Activated CD4-positive, alpha-beta memory T cell treated with anti-CD3 and anti-CD28 coated beads, Interleukin-2, amount 10 ng/mL, durations not matched to agents 7 days and 5 days (primary cell): ENCODE measurements at regions of chr4 and their contacts with region 1.

Region 1: GRCh38 chr4:77095101-77095821 is 19.5 kb upstream of the CCNI start:
- DNase-seq: peak; percentile 77
- H3K4me3 Mint-ChIP-seq: no peak overlapping the region
- H3K27ac Mint-ChIP-seq: no peak overlapping the region
- H3K4me1 Mint-ChIP-seq: peaks cover 12% of the 10 kb centered on the region
- H3K27me3 Mint-ChIP-seq: no peaks in the 10 kb centered on the region

Region 2: GRCh38 chr4:77075869-77076799 is 19.1 kb before region 1 on chr4 and contains the start of gene CCNI:
- CTCF ChIA-PET with region 1: interaction called, 18 read pairs
- POLR2A ChIA-PET with region 1: interaction called, 12 read pairs
- DNase-seq: peak; percentile 94
- H3K4me3 Mint-ChIP-seq: no peak within 1 kb of the TSS
- H3K27ac Mint-ChIP-seq: peak within 1 kb of the TSS; percentile 99
- H3K4me1 Mint-ChIP-seq: peaks cover 40% of the 10 kb centered on the region
- H3K27me3 Mint-ChIP-seq: peaks cover 3% of the 10 kb centered on the region
- total RNA-seq, gene CCNI: 244 to 246 TPM

Region 3: GRCh38 chr4:77082886-77083608 is 12.2 kb before region 1 on chr4:
- CTCF ChIA-PET with region 1: interaction called, 18 read pairs
- POLR2A ChIA-PET with region 1: interaction called, 3 read pairs
- DNase-seq: no peak
- H3K4me3 Mint-ChIP-seq: no peak overlapping the region
- H3K27ac Mint-ChIP-seq: no peak overlapping the region
- H3K4me1 Mint-ChIP-seq: peaks cover 8% of the 10 kb centered on the region
- H3K27me3 Mint-ChIP-seq: no peaks in the 10 kb centered on the region

Region 4: DNA sequence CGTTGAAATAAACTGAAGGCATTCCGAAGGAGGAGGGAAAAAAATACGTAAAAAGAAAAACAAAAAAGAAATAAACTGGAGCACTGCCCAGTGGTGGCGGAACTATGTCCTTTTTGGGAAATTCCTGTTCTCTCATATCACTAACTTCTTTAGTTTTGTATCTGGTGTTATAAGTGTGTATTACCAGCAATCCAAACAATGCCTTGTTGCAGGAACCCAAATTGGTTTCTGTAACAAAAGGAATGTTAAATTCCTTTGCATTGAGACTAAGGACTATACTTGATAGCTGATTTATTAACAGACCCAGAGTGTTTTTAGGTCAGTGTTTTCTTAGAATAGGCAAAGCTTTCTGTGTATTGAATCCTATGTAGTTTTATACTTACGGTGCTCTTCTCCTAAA is 68.4 kb after region 1 on chr4:
- CTCF ChIA-PET with region 1: interaction called, 11 read pairs
- POLR2A ChIA-PET with region 1: interaction called, 3 read pairs
- DNase-seq: no peak
- H3K4me3 Mint-ChIP-seq: no peak overlapping the region
- H3K27ac Mint-ChIP-seq: no peak overlapping the region
- H3K4me1 Mint-ChIP-seq: peaks cover 33% of the 10 kb centered on the region
- H3K27me3 Mint-ChIP-seq: no peaks in the 10 kb centered on the region

Region 5: GRCh38 chr4:77193511-77194102 is 98.3 kb after region 1 on chr4:
- CTCF ChIA-PET with region 1: interaction called, 187 read pairs
- POLR2A ChIA-PET with region 1: no interaction called
- DNase-seq: peak; percentile 73
- H3K4me3 Mint-ChIP-seq: peak overlapping the region; percentile 77
- H3K27ac Mint-ChIP-seq: peak overlapping the region; percentile 78
- H3K4me1 Mint-ChIP-seq: peaks cover 19% of the 10 kb centered on the region
- H3K27me3 Mint-ChIP-seq: peaks cover 5% of the 10 kb centered on the region

Region 6: GRCh38 chr4:77203380-77204197 is 108.3 kb after region 1 on chr4:
- CTCF ChIA-PET with region 1: interaction called, 187 read pairs
- POLR2A ChIA-PET with region 1: interaction called, 3 read pairs
- DNase-seq: peak; percentile 61
- H3K4me3 Mint-ChIP-seq: no peak overlapping the region
- H3K27ac Mint-ChIP-seq: no peak overlapping the region
- H3K4me1 Mint-ChIP-seq: peaks cover 7% of the 10 kb centered on the region
- H3K27me3 Mint-ChIP-seq: peaks cover 4% of the 10 kb centered on the region

Region 7: DNA sequence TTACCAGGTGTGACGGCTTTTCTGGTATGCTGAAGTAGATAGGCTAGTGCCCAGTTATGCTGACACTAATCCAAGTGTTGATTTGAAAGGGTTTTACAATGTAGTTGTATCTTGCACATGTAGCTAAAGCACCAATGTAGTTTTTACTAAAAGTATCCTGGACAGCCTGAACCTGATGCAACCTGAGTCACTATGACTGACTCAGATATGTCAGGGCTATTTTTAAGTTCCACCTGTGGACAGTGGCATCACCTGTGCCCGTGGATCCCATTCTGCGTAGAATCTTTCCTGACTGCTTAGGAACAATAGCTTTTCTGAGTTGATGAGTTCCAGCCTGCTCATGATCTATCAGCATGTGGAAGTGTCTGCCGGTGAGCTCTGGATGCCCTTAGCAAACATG is 119.8 kb after region 1 on chr4:
- CTCF ChIA-PET with region 1: interaction called, 10 read pairs
- POLR2A ChIA-PET with region 1: no interaction called
- DNase-seq: no peak
- H3K4me3 Mint-ChIP-seq: no peak overlapping the region
- H3K27ac Mint-ChIP-seq: no peak overlapping the region
- H3K4me1 Mint-ChIP-seq: no peaks in the 10 kb centered on the region
- H3K27me3 Mint-ChIP-seq: peaks cover 3% of the 10 kb centered on the region

Region 8: DNA sequence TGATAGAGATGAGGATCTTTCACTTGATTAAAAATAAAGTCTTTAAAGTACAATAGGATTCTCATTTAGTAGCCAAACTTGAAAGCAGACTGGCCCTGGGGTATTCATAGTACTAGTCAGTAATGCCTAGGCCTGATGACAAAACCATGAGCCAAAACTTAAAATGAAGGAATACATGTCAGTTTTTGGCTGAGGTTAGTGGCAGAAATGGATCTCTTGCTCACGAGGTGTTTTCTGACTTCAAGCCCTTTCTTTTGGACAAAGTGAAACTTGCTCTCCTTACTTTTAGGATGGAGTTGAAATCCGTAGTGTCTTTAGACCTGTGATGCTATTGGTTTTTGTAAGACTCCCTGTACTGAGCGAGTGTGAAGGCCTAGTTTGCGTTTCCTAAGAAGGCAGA is 219.4 kb after region 1 on chr4:
- CTCF ChIA-PET with region 1: no interaction called
- POLR2A ChIA-PET with region 1: no interaction called
- DNase-seq: no peak
- H3K4me3 Mint-ChIP-seq: no peak overlapping the region
- H3K27ac Mint-ChIP-seq: no peak overlapping the region
- H3K4me1 Mint-ChIP-seq: no peaks in the 10 kb centered on the region
- H3K27me3 Mint-ChIP-seq: peaks cover 1% of the 10 kb centered on the region